Activated CD4-positive, alpha-beta T cell treated with anti-CD3 and anti-CD28 coated beads, Interleukin-2, amount 10 ng/mL, durations not matched to agents 24 days and 14 days (primary cell): ENCODE measurements at regions of chr5 and their contacts with region 1.

Region 1: DNA sequence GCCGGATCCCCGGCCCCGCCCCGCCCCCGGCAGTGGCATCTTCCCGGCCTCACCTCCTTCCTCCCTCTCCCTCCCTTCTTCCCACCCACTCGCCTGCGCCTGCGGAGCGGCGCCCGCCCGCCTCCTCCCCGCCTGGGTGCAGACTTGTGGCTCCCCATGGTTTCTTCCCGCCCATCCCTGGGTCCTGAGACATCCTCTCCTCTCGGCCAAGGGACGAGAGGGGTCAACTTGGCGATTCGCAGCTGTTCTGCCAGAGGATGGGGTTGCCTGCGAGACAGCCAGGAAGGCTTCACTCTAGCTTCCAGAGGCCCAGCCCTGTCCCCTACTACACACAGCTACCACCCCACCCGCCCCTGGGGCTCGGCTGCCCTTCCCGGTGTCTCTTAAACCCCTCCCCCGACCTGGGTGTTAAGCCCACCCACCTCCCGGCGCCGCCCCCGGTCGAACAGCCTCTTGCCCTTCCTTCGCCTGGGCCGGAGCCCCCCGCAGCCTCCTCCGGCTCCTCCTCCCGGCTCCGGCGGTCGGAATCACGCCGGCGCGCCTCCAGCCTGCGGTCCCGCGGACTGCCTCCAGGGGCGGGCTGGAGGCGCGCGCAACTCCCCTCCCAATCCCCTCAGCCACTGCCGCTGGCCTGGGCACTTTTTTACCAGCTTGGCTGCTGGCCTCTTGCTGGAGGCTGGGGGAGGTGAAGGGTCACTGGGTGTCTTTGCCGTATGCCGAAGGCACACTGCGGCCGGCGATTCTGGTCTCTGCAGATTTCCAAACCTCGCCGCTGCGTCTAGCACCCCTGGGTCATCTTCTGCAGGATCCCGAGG is 1.9 kb downstream of the JADE2 start:
- DNase-seq: peak; percentile 92
- H3K4me3 Mint-ChIP-seq: peak overlapping the region; percentile 89
- H3K27ac Mint-ChIP-seq: peak overlapping the region; percentile 94
- H3K4me1 Mint-ChIP-seq: peaks cover 30% of the 10 kb centered on the region
- H3K27me3 Mint-ChIP-seq: no peaks in the 10 kb centered on the region

Region 2: GRCh38 chr5:134004592-134005375 is 522.6 kb before region 1 on chr5 and contains the start of gene VDAC1:
- intact Hi-C with region 1: loop called (anchors 10 kb)
- DNase-seq: peak; percentile 95
- H3K4me3 Mint-ChIP-seq: peak within 1 kb of the TSS; percentile 93
- H3K27ac Mint-ChIP-seq: peak within 1 kb of the TSS; percentile 96
- H3K4me1 Mint-ChIP-seq: peaks cover 40% of the 10 kb centered on the region
- H3K27me3 Mint-ChIP-seq: no peaks in the 10 kb centered on the region
- total RNA-seq, gene VDAC1: 508 and 515 TPM in 2 replicates

Region 3: GRCh38 chr5:134370871-134371833 is 156.2 kb before region 1 on chr5 and contains the start of gene UBE2B:
- intact Hi-C with region 1: loop called (anchors 1 kb)
- DNase-seq: peak; percentile 98
- H3K4me3 Mint-ChIP-seq: peak within 1 kb of the TSS; percentile 93
- H3K27ac Mint-ChIP-seq: peak within 1 kb of the TSS; percentile 93
- H3K4me1 Mint-ChIP-seq: peaks cover 42% of the 10 kb centered on the region
- H3K27me3 Mint-ChIP-seq: peaks cover 3% of the 10 kb centered on the region
- total RNA-seq, gene UBE2B: 108 and 109 TPM in 2 replicates

Region 4: GRCh38 chr5:134503088-134503946 is 24.0 kb before region 1 on chr5:
- intact Hi-C with region 1: loop called (anchors 1 kb)
- DNase-seq: peak; percentile 91
- H3K4me3 Mint-ChIP-seq: peak overlapping the region; percentile 65
- H3K27ac Mint-ChIP-seq: peak overlapping the region; percentile 95
- H3K4me1 Mint-ChIP-seq: peaks cover 33% of the 10 kb centered on the region
- H3K27me3 Mint-ChIP-seq: no peaks in the 10 kb centered on the region

Region 5: GRCh38 chr5:134555890-134556311 is 28.5 kb after region 1 on chr5:
- intact Hi-C with region 1: loop called (anchors 1 kb)
- DNase-seq: peak; percentile 89
- H3K4me3 Mint-ChIP-seq: peak overlapping the region; percentile 80
- H3K27ac Mint-ChIP-seq: peak overlapping the region; percentile 97
- H3K4me1 Mint-ChIP-seq: peaks cover 33% of the 10 kb centered on the region
- H3K27me3 Mint-ChIP-seq: no peaks in the 10 kb centered on the region

Region 6: DNA sequence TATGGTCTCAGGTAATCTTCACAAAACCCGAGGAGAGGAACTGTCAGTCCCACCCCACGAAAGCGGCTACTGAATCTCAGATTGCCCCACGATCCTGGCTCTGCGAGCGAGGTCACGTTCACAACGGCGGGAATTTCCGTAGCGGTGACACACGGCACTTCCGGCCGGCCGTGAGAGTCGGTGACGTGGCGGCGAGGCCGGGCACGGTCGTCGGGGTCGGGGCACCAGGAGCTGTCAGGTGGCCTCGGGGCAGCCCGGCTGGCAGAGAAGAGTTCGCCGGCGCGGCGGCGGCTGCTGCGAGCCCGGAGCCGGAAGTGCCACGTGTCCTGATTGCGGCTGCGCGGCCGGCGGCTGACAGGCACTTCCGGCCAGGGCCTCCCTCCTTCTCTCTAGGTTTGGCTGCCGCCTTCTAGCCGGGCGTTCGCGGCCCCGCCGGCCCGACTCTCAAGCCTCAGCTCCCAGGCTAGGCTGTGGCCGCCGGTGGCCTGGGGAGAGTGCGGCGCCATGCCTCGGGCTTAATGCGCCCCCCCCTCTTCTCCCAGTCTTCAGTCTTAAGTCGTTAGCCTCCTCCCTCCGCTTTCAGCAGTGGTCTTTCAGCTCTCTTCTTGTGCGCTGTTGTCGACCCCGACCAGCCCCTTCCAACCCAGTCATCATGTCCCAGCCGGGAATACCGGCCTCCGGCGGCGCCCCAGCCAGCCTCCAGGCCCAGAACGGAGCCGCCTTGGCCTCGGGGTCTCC is 121.2 kb after region 1 on chr5 and contains the start of gene SEC24A:
- intact Hi-C with region 1: loop called (anchors 5 kb)
- DNase-seq: peak; percentile 97
- H3K4me3 Mint-ChIP-seq: peak within 1 kb of the TSS; percentile 94
- H3K27ac Mint-ChIP-seq: peak within 1 kb of the TSS; percentile 97
- H3K4me1 Mint-ChIP-seq: peaks cover 23% of the 10 kb centered on the region
- H3K27me3 Mint-ChIP-seq: no peaks in the 10 kb centered on the region
- total RNA-seq, gene SEC24A: 29.4 and 31.2 TPM in 2 replicates

Region 7: GRCh38 chr5:134794082-134794481 is 266.7 kb after region 1 on chr5:
- intact Hi-C with region 1: no loop called
- DNase-seq: no peak
- H3K4me3 Mint-ChIP-seq: no peak overlapping the region
- H3K27ac Mint-ChIP-seq: no peak overlapping the region
- H3K4me1 Mint-ChIP-seq: peaks cover 2% of the 10 kb centered on the region
- H3K27me3 Mint-ChIP-seq: no peaks in the 10 kb centered on the region

Region 8: GRCh38 chr5:135019314-135019713 is 492.0 kb after region 1 on chr5:
- intact Hi-C with region 1: no loop called
- DNase-seq: no peak
- H3K4me3 Mint-ChIP-seq: no peak overlapping the region
- H3K27ac Mint-ChIP-seq: no peak overlapping the region
- H3K4me1 Mint-ChIP-seq: no peaks in the 10 kb centered on the region
- H3K27me3 Mint-ChIP-seq: peaks cover 19% of the 10 kb centered on the region